ENCODE measurements at regions of chr19 and their contacts with region 1.

Region 1: DNA sequence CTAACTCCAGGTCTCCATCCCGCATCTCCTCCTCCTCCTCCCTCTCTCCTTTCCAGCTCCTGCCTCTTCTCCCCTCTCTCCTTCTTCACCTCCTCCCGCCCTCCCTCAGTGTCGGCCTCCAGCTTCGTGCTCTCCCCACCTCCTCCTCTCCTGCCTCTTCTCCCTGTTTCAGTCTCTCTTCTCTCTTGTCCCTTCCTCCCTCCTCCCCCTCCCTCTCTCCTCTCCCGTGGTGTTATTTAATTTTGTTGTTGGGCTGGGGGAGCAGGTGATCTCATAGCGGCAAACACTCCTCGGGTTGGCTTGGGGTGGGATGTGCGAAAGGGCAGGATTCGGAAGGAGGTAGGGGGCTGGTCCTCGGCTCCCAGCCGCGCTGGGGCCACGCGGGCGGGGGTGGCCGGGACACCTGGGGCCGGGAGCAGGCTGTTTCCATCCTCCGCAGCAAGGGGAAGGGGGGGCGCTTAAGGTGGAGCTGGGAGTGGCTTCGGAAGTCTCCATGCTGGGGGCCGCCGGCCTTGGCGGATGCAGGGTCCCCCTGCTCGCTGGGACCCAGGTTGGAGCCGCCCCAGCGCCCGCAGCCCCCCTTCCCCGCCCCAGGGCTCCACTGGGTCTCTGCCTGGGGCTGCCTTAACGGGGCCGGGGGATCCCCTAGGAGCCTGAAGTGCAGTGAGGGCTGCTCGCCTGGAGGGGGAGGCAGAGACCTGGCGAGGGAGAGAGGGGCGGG is at the start of gene CA11:
- DNase-seq: peak; percentile 95
- H3K4me3 Mint-ChIP-seq: peak within 1 kb of the TSS; percentile 78
- H3K27ac Mint-ChIP-seq: peak within 1 kb of the TSS; percentile 80
- H3K4me1 Mint-ChIP-seq: peaks cover 31% of the 10 kb centered on the region
- H3K27me3 Mint-ChIP-seq: no peaks in the 10 kb centered on the region
- total RNA-seq, gene CA11: 12.0 to 14.9 TPM

Region 2: GRCh38 chr19:48674921-48675824 is 29.0 kb after region 1 on chr19:
- CTCF ChIA-PET with region 1: interaction called, 17 read pairs
- intact Hi-C with region 1: loop called (anchors 1 kb)
- DNase-seq: peak; percentile 86
- H3K4me3 Mint-ChIP-seq: no peak overlapping the region
- H3K27ac Mint-ChIP-seq: no peak overlapping the region
- H3K4me1 Mint-ChIP-seq: peaks cover 5% of the 10 kb centered on the region
- H3K27me3 Mint-ChIP-seq: no peaks in the 10 kb centered on the region

Region 3: DNA sequence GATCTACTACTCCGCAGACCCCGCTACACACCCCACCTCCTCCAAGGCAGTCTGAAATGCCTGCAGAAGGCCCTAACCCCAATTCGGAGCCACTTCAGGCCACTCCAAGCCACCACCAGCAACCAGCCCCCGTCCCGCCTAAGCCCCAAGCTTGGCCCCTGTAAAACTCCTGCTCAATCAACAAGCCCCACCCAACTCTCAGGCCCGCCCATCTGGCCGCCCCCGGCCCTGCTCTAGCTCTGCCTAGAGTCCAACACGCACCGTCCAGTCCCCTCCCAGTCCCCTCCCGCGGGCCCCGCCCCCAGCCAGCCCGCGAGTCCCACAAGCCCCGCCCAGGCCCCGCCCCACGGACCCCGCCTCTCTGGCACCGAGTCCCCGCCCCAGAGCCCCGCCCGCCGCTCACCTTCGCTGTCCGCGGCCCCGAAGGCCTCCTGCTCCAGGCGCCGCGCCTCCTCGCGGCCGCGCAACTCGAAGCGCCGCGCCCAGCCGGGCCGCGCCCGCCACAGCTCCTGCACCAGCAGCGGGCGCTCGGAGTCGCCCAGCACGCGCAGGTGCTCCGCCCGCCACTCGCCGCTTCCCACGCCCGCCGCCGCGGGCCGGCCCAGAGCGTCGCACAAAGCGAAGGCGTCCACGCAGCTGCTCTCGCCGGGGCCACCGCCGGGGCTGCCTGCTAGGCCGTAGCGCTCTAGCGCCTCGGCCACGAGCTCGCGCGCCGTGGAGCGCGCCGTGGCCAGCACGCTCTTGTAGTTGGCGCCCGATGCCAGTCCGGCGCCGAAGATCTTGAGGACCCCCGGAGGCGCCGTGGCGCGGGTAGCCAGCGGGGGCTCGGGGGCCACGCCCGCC is 92.6 kb after region 1 on chr19:
- CTCF ChIA-PET with region 1: interaction called, 13 read pairs
- intact Hi-C with region 1: loop called (anchors 2 kb)
- DNase-seq: peak; percentile 96
- H3K4me3 Mint-ChIP-seq: peak overlapping the region; percentile 56
- H3K27ac Mint-ChIP-seq: no peak overlapping the region
- H3K4me1 Mint-ChIP-seq: peaks cover 17% of the 10 kb centered on the region
- H3K27me3 Mint-ChIP-seq: peaks cover 10% of the 10 kb centered on the region

Region 4: DNA sequence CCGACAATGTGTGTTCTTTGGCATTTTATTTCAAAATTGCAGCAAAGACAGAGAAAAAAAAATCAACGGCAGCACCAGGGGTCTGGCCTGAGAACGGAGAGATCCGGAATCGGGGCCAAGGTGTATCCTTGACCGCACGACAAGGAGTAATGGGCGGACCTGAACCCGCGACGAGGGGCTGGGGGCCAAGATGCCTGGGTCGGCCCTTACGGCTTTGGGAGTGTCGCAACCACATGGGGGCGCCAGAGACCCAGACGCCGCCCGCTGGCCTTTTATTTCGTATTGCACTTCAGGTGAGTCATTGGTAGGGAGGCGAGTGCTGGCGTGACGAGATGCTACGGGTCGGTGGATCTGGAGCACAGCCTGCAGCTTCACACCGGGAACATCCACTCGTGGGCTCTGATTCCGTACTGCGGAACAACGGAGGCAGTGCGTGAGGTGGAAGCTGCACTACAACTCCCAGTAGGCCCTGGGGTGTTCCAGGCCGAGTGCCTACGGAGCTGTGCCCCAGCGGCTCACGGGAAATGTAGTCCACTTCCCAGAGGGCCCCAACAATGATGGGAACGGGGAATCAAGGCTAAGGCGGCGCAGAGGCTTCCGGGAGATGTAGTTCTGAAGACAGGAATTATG is 149.0 kb after region 1 on chr19:
- CTCF ChIA-PET with region 1: interaction called, 6 read pairs
- intact Hi-C with region 1: loop called (anchors 1 kb)
- DNase-seq: peak; percentile 89
- H3K4me3 Mint-ChIP-seq: peak overlapping the region; percentile 82
- H3K27ac Mint-ChIP-seq: peak overlapping the region; percentile 87
- H3K4me1 Mint-ChIP-seq: peaks cover 10% of the 10 kb centered on the region
- H3K27me3 Mint-ChIP-seq: no peaks in the 10 kb centered on the region

Region 5: GRCh38 chr19:48842789-48843162 is 196.6 kb after region 1 on chr19:
- CTCF ChIA-PET with region 1: interaction called, 3 read pairs
- intact Hi-C with region 1: loop called (anchors 1 kb)
- DNase-seq: peak; percentile 70
- H3K4me3 Mint-ChIP-seq: no peak overlapping the region
- H3K27ac Mint-ChIP-seq: no peak overlapping the region
- H3K4me1 Mint-ChIP-seq: no peaks in the 10 kb centered on the region
- H3K27me3 Mint-ChIP-seq: no peaks in the 10 kb centered on the region